ENCODE measurements at regions of chr5 and their contacts with region 1.

Region 1: DNA sequence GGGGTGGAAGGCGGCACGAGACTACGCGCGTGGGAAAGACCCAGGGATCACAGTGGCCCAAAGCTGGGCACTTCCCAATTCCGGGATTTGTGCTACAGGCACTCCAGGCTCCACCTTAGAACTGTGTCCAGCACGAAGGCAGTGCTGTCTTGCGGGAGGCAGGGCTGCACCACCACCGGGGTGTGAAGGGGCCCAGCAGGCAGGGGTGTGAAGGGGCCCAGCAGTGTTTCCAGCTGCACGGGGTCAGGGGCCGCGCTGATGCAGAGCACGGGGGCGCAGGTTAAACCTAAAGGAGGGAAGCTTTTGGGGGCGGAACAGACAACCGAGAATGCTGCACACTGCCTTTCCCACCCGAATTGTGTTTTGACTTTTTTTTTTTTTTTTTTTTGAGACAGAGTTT is 1.1 kb upstream of the PDCD6 start:
- DNase-seq: no peak
- H3K4me3 ChIP-seq: peak overlapping the region; percentile 60; the same call in 1 of the 2 replicates
- H3K27ac ChIP-seq: peak overlapping the region; percentile 64
- H3K4me1 ChIP-seq: peaks cover 19% of the 10 kb centered on the region
- H3K27me3 ChIP-seq: no peaks in the 10 kb centered on the region
- CTCF ChIP-seq: no peak

Region 2: DNA sequence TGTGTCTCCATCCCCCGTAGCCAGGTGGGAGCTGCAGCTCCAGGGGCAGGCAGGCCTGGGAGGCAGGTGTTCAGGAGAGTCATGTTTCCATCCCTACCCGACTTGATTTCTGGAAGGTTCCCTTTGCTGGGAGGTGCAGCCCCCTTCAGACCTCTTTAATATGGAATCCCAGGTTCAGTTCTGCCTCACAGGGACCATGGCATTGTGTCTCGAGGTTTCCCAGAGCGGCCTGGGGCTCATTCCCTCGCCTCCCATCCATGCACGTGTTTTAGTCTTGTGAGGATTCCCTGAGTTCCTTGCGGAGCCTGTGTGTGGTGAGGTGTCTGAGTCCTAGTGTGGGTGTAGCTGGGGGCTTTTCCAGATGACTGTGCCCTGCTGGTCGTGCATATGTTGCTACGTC is 34.7 kb after region 1 on chr5:
- CTCF ChIA-PET with region 1: interaction called, 5 read pairs
- POLR2A ChIA-PET with region 1: interaction called, 23 read pairs
- intact Hi-C with region 1: no loop called
- DNase-seq: no peak
- H3K4me3 ChIP-seq: no peak overlapping the region
- H3K27ac ChIP-seq: no peak overlapping the region
- H3K4me1 ChIP-seq: no peaks in the 10 kb centered on the region; the same call in 1 of the 2 replicates
- H3K27me3 ChIP-seq: no peaks in the 10 kb centered on the region
- CTCF ChIP-seq: no peak

Region 3: DNA sequence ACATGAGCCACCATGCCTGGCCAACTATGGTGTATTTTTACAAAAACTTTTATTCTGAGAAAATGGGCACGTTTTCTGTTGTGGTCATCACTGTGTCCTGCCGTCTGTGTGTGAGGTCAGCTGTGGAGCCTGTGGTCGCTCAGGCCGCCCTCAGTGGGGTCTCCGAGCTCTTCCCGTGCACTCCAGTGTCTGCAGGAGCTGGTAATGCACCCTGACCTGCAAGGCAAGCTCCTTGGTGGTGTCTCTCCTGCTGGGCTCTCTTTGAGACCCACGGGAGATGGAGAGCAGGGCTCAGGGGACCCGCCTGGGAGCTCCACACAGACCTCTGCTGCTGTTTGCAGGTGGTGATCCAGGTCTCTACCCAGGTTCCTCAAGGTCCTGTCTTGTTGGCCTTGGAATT is 41.6 kb after region 1 on chr5:
- CTCF ChIA-PET with region 1: interaction called, 14 read pairs
- POLR2A ChIA-PET with region 1: no interaction called
- intact Hi-C with region 1: no loop called
- DNase-seq: no peak
- H3K4me3 ChIP-seq: no peak overlapping the region
- H3K27ac ChIP-seq: no peak overlapping the region
- H3K4me1 ChIP-seq: no peaks in the 10 kb centered on the region
- H3K27me3 ChIP-seq: no peaks in the 10 kb centered on the region
- CTCF ChIP-seq: no peak

Region 4: DNA sequence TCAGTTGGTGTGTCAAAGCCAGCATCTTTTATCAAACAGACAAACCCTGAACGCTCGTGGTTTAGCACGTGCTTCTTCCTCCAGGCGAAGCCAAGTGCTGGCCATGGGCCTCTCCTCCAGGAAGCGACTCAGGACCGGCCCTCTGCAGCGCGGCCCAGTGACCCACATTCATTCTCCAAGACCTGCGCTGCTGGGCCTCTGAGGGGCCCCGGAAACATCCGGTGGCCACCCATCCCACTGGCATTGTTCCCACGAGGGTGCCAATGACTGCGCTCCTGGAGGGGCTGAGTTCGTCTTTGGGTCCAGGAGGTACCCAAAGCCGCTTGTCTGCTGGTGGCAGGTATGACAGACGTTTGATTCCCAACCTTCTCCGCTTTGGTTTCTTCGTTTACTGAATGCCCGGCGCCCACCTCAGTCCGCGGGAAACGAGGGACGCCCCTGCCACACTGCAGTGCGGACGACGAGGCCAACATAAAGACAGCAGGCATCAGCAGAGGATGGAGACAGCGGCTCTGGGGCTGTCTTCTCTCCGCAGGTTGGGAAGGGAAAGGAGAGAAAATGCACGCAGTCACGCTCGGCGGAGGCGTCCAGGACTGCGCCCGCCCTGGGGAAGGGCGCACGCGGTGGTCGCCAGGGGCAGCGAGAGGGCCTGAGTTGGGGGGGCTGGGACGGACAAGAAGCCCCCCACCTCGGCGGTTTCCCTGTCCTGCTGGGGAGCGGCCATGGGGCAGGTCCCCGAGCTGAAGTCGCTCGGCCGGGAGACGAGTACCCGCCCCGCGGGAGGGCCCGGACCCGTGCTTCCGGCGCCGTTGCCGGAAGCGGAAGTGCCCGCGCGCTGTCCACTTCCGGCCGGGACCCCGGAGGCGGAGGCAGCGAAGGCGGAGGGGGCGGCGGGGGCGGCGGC is 172.2 kb after region 1 on chr5 and contains the start of gene EXOC3:
- CTCF ChIA-PET with region 1: interaction called, 25 read pairs
- POLR2A ChIA-PET with region 1: interaction called, 3 read pairs
- intact Hi-C with region 1: no loop called
- DNase-seq: peak; percentile 71 to 92
- H3K4me3 ChIP-seq: peak within 1 kb of the TSS; percentile 99
- H3K27ac ChIP-seq: peak within 1 kb of the TSS; percentile 25
- H3K4me1 ChIP-seq: peaks cover 24% of the 10 kb centered on the region
- H3K27me3 ChIP-seq: no peaks in the 10 kb centered on the region
- CTCF ChIP-seq: no peak
- total RNA-seq, gene EXOC3: 155 and 188 TPM in 2 replicates

Region 5: GRCh38 chr5:463952-464351 is 193.6 kb after region 1 on chr5:
- CTCF ChIA-PET with region 1: no interaction called
- POLR2A ChIA-PET with region 1: no interaction called
- intact Hi-C with region 1: no loop called
- DNase-seq: no peak
- H3K4me3 ChIP-seq: no peak overlapping the region
- H3K27ac ChIP-seq: no peak overlapping the region
- H3K4me1 ChIP-seq: peaks cover 9% of the 10 kb centered on the region
- H3K27me3 ChIP-seq: no peaks in the 10 kb centered on the region
- CTCF ChIP-seq: no peak

Region 6: GRCh38 chr5:657570-657969 is 387.2 kb after region 1 on chr5:
- CTCF ChIA-PET with region 1: no interaction called
- POLR2A ChIA-PET with region 1: interaction called, 52 read pairs
- intact Hi-C with region 1: no loop called
- DNase-seq: peak in 1 of 2 experiments; percentile 75
- H3K4me3 ChIP-seq: no peak overlapping the region
- H3K27ac ChIP-seq: no peak overlapping the region
- H3K4me1 ChIP-seq: no peaks in the 10 kb centered on the region
- H3K27me3 ChIP-seq: no peaks in the 10 kb centered on the region
- CTCF ChIP-seq: no peak

Region 7: GRCh38 chr5:1536322-1536845 is 1266.0 kb after region 1 on chr5:
- CTCF ChIA-PET with region 1: interaction called, 18 read pairs
- POLR2A ChIA-PET with region 1: no interaction called
- intact Hi-C with region 1: no loop called
- DNase-seq: no peak
- H3K4me3 ChIP-seq: no peak overlapping the region
- H3K27ac ChIP-seq: no peak overlapping the region
- H3K4me1 ChIP-seq: no peaks in the 10 kb centered on the region
- H3K27me3 ChIP-seq: no peaks in the 10 kb centered on the region
- CTCF ChIP-seq: no peak